A549 (cell line): ENCODE measurements at regions of chr3 and their contacts with region 1.

Region 1: DNA sequence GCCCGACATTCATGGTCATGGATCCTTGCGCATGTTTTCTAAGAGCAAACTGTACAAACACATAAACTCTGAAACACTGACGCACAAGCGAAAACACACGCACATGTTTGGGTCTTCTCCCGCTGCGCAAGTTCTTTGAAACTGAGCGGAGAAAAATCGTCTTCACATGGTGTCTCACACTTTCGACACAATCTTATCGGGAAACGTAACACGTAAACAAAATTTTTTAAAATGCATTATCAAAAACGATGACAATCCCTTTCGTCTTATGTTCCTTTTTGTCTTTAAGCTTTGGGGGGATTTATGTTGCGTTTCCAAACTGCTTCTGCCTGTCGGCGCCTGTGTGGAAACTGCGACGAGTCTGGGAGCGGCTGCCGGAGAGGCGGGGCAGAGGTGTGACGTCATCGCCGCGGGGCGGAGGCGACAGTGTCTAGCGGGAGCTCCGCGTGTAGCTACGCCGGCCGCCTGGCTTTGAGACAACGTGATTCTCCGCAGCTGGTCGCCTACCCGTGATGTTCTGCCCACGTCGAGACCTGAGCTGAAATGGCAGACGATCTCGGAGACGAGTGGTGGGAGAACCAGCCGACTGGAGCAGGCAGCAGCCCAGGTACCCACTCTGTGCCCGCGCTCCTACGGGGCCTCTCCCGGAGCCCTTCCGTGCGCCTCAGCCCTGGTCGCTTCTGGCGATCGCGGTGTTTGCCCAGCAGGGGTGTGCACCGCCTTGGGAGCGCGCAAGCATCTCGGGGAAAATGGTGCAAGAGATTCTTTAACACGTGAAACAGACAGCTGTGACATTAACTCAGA is at the start of gene CMSS1:
- DNase-seq: peak; percentile 78 to 94
- ATAC-seq: peak; percentile 96 to 98
- H3K4me3 ChIP-seq: peak within 1 kb of the TSS; percentile 62
- H3K27ac ChIP-seq: peak within 1 kb of the TSS; percentile 78 to 88
- H3K4me1 ChIP-seq: peaks cover 6% of the 10 kb centered on the region; the same call in 2 of the 3 replicates
- CTCF ChIP-seq: no peak
- EP300 ChIP-seq: no peak
- POLR2A ChIP-seq: peak; percentile 83
- RAD21 ChIP-seq: no peak
- polyA plus RNA-seq, gene CMSS1: 48.1 and 62.9 TPM in 2 replicates

Region 2: GRCh38 chr3:99579246-99579645 is 238.4 kb before region 1 on chr3:
- CTCF ChIA-PET with region 1: no interaction called
- POLR2A ChIA-PET with region 1: no interaction called
- DNase-seq: no peak
- ATAC-seq: no peak
- H3K4me3 ChIP-seq: no peak overlapping the region
- H3K27ac ChIP-seq: no peak overlapping the region
- H3K4me1 ChIP-seq: no peaks in the 10 kb centered on the region
- CTCF ChIP-seq: no peak
- EP300 ChIP-seq: no peak
- POLR2A ChIP-seq: no peak
- RAD21 ChIP-seq: no peak

Region 3: GRCh38 chr3:99731499-99731898 is 86.1 kb before region 1 on chr3:
- CTCF ChIA-PET with region 1: no interaction called
- POLR2A ChIA-PET with region 1: no interaction called
- DNase-seq: no peak
- ATAC-seq: no peak
- H3K4me3 ChIP-seq: no peak overlapping the region
- H3K27ac ChIP-seq: no peak overlapping the region
- H3K4me1 ChIP-seq: no peaks in the 10 kb centered on the region
- CTCF ChIP-seq: no peak
- EP300 ChIP-seq: no peak
- POLR2A ChIP-seq: no peak
- RAD21 ChIP-seq: no peak

Region 4: DNA sequence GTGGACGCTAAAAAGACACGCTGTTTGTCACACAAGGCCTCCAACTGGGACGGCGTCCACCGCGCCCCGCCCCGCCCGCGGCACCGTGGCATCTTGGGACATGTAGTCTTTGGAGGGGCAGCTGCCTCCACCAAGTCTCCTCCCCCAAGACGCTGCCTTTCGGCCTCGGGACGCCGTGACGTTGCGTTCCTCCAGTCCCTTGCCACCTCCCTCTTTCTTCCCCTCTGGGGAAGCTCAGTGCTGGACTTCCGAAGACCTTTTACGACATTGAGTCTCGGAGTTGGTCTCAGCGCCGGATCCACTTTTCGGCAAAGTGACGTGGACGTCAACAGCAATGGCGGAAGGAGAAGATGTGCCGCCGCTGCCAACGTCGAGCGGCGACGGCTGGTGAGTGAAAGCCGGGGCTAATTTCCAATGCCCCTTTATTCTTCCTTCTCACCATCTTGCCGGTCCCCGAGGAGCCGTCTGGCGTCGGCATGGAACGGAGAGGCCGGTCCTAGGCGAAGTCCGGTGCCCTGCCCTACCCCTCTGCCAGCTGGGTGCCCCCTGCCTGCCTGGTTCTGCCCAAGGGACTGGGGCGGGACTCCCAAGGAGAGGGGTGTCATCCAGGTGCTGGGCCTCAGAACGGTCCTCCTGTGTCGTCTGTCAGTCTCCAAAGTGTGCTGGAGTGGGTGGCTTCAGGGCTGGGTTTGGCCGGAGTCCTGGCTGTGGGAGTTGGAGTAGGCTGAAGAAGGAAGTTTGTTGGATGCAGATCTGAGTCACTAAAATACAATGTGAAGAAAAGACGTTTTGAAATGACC is 443.2 kb after region 1 on chr3 and contains the start of gene TBC1D23:
- CTCF ChIA-PET with region 1: interaction called, 8 read pairs
- POLR2A ChIA-PET with region 1: interaction called, 12 read pairs
- DNase-seq: peak; percentile 98 to 100
- ATAC-seq: peak; percentile 100
- H3K4me3 ChIP-seq: peak within 1 kb of the TSS; percentile 88
- H3K27ac ChIP-seq: peak within 1 kb of the TSS; percentile 91 to 94
- H3K4me1 ChIP-seq: peaks cover 10% of the 10 kb centered on the region; the same call in 2 of the 3 replicates
- CTCF ChIP-seq: no peak
- EP300 ChIP-seq: no peak
- POLR2A ChIP-seq: peak; percentile 59
- RAD21 ChIP-seq: no peak
- polyA plus RNA-seq, gene TBC1D23: 29.4 and 31.3 TPM in 2 replicates

Region 5: DNA sequence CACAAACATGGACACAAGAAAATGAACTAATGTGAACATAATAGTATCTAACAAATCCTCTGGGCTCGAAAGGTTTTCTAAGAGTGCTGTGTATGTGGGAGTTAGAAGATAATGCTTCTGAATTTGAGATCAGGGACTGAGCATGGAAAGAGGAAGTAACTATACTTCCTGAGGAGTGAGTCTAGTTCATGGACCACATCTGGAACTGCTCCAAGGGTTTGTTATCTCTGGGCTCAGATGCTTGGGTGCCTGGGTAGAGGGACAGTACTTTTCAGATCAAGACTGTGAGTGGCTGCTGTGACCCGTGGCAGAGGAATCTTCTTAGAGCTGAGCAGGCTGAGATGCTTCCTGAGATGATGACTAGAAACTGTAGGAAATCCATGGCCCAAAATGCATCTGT is 471.7 kb after region 1 on chr3:
- CTCF ChIA-PET with region 1: no interaction called
- POLR2A ChIA-PET with region 1: interaction called, 11 read pairs
- DNase-seq: no peak
- ATAC-seq: no peak
- H3K4me3 ChIP-seq: no peak overlapping the region
- H3K27ac ChIP-seq: no peak overlapping the region
- H3K4me1 ChIP-seq: no peaks in the 10 kb centered on the region
- CTCF ChIP-seq: no peak
- EP300 ChIP-seq: no peak
- POLR2A ChIP-seq: no peak
- RAD21 ChIP-seq: no peak